H1 (cell line): ENCODE measurements at regions of chr22 and their contacts with region 1.

Region 1: DNA sequence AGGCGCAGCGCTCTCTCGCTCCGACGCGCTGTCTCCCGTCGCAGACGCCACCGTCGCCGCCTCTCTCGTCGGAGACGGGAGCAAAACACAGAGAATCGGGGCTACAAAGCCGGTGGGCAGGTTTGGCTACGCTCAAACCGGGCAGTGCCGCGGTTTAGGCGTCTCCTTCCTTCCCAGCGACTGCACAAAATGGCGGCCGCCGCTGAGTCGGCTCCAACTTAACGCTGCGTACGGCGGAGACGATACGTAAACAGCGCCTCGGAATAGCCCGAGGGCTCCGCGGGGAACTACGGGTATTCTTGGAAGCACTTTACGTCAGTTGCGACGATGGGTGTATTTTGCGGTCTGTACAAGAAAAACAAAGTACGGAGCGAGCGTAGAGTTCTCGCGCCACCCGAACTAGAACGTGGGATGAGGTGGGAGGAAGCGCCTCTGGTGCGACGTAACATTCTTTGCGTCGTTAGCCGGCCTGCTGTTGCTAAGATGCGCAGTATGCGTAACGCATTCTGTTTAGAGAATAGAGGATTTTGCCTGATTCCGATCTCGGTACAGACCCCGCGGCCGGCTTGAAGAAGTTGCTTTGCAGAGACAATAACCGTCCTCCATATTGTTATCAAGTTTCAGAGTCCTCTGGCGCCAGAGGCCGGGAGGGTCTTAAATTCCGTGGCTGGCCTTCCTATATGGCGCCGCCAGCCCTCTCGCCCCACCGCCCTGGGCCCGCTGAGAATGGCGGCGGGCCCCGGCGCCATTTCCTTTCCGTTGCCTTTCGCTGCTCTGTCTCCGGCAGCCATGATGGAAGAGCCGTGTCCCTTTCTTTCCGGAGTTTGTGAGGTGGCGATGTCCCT is at the start of gene DDX17:
- DNase-seq: peak; percentile 78 to 96
- H3K4me3 ChIP-seq: peak within 1 kb of the TSS; percentile 89 to 99 (median 96)
- H3K27ac ChIP-seq: peak within 1 kb of the TSS; percentile 99
- H3K4me1 ChIP-seq: peaks cover 0 to 11% (median 5%) of the 10 kb centered on the region in 4 experiments; a peak in 5 of 7 replicates
- H3K27me3 ChIP-seq: no peaks in the 10 kb centered on the region
- CTCF ChIP-seq: no peak
- EP300 ChIP-seq: peak in 1 of 2 experiments; percentile 41; a peak in 1 of 3 replicates
- POLR2A ChIP-seq: peak; percentile 81 to 92
- RAD21 ChIP-seq: no peak
- total RNA-seq, gene DDX17: 441 and 448 TPM in 2 replicates

Region 2: DNA sequence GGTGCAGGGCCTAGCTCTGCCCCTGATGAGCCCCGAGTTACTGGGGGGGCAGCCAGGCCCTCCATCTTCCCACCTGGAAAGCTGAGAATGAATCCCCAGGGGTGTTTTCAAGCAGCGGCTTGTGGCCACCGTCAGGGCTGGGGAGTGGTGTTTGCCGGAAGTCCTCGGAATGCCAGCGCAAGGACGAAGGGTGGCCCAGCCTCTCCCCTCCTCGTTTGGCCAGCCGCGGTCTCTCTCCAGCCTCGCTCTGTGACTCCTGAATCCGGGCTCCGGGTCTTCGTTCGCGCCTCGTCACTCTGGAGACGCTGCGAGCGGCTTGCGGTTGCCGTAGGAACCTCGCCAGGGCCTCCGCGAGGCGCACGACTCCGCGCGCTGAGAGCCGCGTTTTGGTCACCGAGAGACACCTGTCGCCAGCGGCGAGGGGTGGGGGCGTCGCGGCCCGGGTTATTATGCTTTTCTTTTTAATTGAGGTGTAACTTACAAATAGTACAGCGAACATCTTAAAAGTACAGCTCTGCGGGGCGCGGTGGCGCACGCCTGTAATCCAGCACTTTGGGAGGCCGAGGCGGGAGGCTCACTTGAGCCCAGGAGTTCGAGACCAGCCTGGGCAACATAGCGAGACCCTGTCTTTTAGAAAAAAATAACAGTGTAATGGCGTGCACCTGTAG is 44.8 kb before region 1 on chr22:
- CTCF ChIA-PET with region 1: no interaction called
- POLR2A ChIA-PET with region 1: interaction called, 1,102 read pairs
- DNase-seq: peak; percentile 69 to 98
- H3K4me3 ChIP-seq: peak overlapping the region in 2 of 4 experiments; percentile 19 to 49; a peak in 3 of 8 replicates
- H3K27ac ChIP-seq: no peak overlapping the region
- H3K4me1 ChIP-seq: peaks cover 0 to 16% (median 8%) of the 10 kb centered on the region in 4 experiments; a peak in 6 of 7 replicates
- H3K27me3 ChIP-seq: peaks cover 0 to 38% (median 29%) of the 10 kb centered on the region in 4 experiments; a peak in 6 of 7 replicates
- CTCF ChIP-seq: no peak
- EP300 ChIP-seq: peak in 1 of 2 experiments; percentile 84; a peak in 1 of 3 replicates
- POLR2A ChIP-seq: no peak
- RAD21 ChIP-seq: no peak; a peak in 1 of 4 replicates

Region 3: DNA sequence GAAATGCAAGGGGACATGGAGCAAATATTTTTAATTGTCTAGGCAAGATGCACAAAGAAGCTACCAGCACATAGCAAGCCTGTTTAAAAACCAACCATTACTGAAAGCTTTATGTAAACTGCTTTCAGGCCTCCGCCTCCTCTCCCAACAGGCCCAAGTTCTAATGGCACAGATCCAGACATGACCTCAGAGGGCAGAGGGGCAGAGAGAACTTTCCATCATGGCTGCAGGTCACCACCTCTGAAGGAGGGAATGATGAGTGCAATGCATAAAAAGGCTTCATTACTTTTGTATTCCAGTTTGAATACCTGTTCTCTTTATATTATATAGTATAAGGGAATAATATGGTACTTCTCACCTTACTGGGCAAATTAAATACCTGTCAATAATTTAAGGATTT is 15.4 kb before region 1 on chr22:
- CTCF ChIA-PET with region 1: interaction called, 7 read pairs
- POLR2A ChIA-PET with region 1: interaction called, 1,102 read pairs
- DNase-seq: no peak
- H3K4me3 ChIP-seq: no peak overlapping the region
- H3K27ac ChIP-seq: no peak overlapping the region
- H3K4me1 ChIP-seq: peaks cover 0 to 4% (median 4%) of the 10 kb centered on the region in 4 experiments; a peak in 3 of 7 replicates
- H3K27me3 ChIP-seq: no peaks in the 10 kb centered on the region
- CTCF ChIP-seq: no peak
- EP300 ChIP-seq: no peak
- POLR2A ChIP-seq: peak; percentile 16 to 27; a peak in 2 of 3 replicates
- RAD21 ChIP-seq: no peak

Region 4: DNA sequence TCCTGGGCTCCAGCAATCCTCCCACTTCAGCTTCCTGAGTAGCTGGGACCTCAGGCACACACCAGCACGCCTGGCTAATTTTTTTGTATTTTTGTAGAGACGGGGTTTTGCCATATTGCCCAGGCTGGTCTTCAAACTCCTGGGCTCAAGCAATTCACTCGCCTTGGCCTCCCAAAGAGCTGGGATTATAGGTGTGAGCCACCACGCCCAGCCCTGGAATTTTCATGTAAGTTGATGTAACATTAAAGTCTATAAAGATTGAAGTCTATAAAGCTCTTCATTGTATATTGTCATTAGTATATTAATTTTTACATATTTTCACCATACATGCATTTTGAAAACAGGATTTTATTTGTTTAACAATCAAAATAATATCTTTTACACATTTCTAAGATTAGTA is 12.3 kb after region 1 on chr22:
- CTCF ChIA-PET with region 1: interaction called, 4 read pairs
- POLR2A ChIA-PET with region 1: interaction called, 24 read pairs
- DNase-seq: no peak
- H3K4me3 ChIP-seq: no peak overlapping the region
- H3K27ac ChIP-seq: no peak overlapping the region
- H3K4me1 ChIP-seq: peaks cover 0 to 5% (median 3%) of the 10 kb centered on the region in 4 experiments; a peak in 5 of 7 replicates
- H3K27me3 ChIP-seq: no peaks in the 10 kb centered on the region
- CTCF ChIP-seq: no peak
- EP300 ChIP-seq: no peak
- POLR2A ChIP-seq: no peak
- RAD21 ChIP-seq: no peak

Region 5: GRCh38 chr22:38531251-38531938 is 25.1 kb after region 1 on chr22:
- CTCF ChIA-PET with region 1: no interaction called
- POLR2A ChIA-PET with region 1: no interaction called
- DNase-seq: no peak
- H3K4me3 ChIP-seq: no peak overlapping the region
- H3K27ac ChIP-seq: no peak overlapping the region
- H3K4me1 ChIP-seq: no peaks in the 10 kb centered on the region
- H3K27me3 ChIP-seq: no peaks in the 10 kb centered on the region
- CTCF ChIP-seq: no peak
- EP300 ChIP-seq: no peak
- POLR2A ChIP-seq: no peak
- RAD21 ChIP-seq: no peak

Region 6: GRCh38 chr22:38569972-38570778 is 63.8 kb after region 1 on chr22 and contains the start of gene DMC1:
- CTCF ChIA-PET with region 1: interaction called, 6 read pairs
- POLR2A ChIA-PET with region 1: interaction called, 23 read pairs
- DNase-seq: peak; percentile 85 to 96
- H3K4me3 ChIP-seq: peak within 1 kb of the TSS; percentile 63 to 92 (median 92)
- H3K27ac ChIP-seq: peak within 1 kb of the TSS; percentile 93
- H3K4me1 ChIP-seq: peaks cover 4 to 12% (median 7%) of the 10 kb centered on the region in 4 experiments; a peak in 5 of 7 replicates
- H3K27me3 ChIP-seq: no peaks in the 10 kb centered on the region
- CTCF ChIP-seq: no peak
- EP300 ChIP-seq: no peak
- POLR2A ChIP-seq: peak; percentile 58 to 80
- RAD21 ChIP-seq: no peak
- total RNA-seq, gene DMC1: 7.1 and 7.2 TPM in 2 replicates

Region 7: GRCh38 chr22:38656256-38657044 is 150.1 kb after region 1 on chr22 and contains the starts of genes CBY1 and FAM227A:
- CTCF ChIA-PET with region 1: no interaction called
- POLR2A ChIA-PET with region 1: no interaction called
- DNase-seq: peak; percentile 65 to 97
- H3K4me3 ChIP-seq: peak within 1 kb of the TSS; percentile 86 to 94 (median 87)
- H3K27ac ChIP-seq: peak within 1 kb of the TSS; percentile 99
- H3K4me1 ChIP-seq: peaks cover 0 to 5% (median 1%) of the 10 kb centered on the region in 4 experiments; a peak in 3 of 7 replicates
- H3K27me3 ChIP-seq: no peaks in the 10 kb centered on the region
- CTCF ChIP-seq: no peak
- EP300 ChIP-seq: peak; percentile 20 to 99
- POLR2A ChIP-seq: peak in 1 of 2 experiments; percentile 44; a peak in 1 of 3 replicates
- RAD21 ChIP-seq: no peak; a peak in 1 of 4 replicates
- total RNA-seq, gene CBY1: 23.2 and 24.4 TPM in 2 replicates
- total RNA-seq, gene FAM227A: 3.8 and 3.9 TPM in 2 replicates

Region 8: DNA sequence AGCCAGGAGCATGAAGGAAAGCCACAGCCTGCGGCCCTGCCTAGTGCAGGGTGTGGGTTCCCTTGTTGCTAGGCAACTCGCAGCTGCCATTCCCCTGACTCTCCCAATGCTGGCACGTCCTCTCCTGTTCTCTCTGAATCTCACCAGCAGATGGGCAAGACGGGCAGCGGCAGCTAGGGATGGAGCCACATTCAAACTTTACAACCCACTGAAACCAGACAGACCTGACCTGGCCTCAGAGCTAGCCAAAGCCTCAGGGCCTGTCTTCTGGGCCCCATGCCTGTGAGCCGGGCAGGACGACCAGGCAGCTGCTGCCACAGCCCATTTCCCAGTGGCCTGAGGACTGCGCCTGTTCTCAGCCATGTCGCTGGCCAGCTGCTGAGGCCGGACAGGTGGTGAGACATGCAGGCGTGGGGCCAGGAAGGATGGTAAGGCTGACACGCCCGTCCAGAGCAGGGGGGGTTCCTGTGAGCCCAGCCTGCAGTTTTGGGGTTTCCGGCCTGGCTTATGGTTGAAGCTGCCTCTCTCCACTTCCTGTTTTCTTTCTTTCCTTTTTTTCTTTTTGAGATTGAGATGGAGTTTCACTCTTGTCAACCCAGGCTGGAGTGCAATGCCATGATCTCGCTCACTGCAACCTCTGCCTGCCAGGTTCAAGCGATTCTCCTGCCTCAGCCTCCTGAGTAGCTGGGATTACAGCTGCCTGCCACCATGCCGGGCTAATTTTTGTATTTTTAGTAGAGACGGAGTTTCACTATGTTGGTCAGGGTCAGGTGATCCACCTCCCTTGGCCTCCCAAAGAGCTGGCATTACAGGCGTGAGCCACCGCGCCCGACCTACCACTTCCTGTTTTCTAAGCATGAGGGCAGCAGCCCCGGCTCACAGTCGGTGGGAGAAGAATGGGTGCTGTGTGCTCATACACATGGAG is 245.3 kb after region 1 on chr22:
- CTCF ChIA-PET with region 1: no interaction called
- POLR2A ChIA-PET with region 1: no interaction called
- DNase-seq: no peak
- H3K4me3 ChIP-seq: no peak overlapping the region
- H3K27ac ChIP-seq: no peak overlapping the region
- H3K4me1 ChIP-seq: peaks cover 2 to 12% (median 8%) of the 10 kb centered on the region in 4 experiments
- H3K27me3 ChIP-seq: peaks cover 0 to 6% (median 2%) of the 10 kb centered on the region in 4 experiments; a peak in 5 of 7 replicates
- CTCF ChIP-seq: no peak
- EP300 ChIP-seq: no peak
- POLR2A ChIP-seq: no peak
- RAD21 ChIP-seq: no peak